Activated CD8-positive, alpha-beta T cell treated with anti-CD3 and anti-CD28 coated beads for 36 hours (primary cell): ENCODE measurements at regions of chr10 and their contacts with region 1.

Region 1: DNA sequence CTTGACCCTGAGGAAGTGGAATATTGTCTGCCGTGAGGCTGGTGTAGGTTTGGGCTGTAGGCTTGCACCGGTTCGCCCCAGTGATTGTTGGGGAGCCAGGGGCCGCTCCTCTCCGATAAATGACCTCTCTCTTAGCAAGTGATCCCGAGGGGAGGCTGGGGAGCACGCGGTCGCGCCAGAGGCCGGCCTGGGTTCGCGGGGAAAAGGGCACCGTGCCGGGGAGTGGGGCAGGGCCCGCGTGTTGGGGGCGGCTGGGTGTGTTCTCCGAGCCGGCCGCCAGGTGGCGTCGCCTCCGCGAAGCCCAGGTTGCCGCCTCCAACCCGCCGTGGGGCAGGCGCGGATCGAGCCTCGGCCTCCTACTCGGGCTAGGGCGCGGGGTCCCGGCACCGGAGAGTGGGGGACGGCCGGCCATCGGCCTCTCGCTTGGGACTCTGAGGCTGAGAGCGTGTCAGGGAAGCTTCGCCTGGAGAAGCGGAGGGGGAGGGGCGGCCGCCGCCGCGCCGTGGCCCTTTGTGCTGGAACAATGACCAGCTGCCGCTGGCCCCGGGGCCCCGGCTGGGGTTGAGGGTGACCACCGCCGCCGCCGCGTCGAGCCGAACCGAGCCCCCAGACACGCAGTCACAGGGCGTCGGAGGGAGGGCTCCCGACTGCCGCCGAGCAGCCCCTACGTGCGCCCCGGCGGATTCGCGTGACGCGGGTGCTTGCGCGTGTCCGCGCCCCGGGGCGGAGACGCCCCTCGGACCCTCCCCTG is 442 bp upstream of the LZTS2 start:
- DNase-seq: peak; percentile 78
- ATAC-seq: peak; percentile 64
- H3K4me3 Mint-ChIP-seq: peak overlapping the region; percentile 78
- H3K27ac Mint-ChIP-seq: peak overlapping the region; percentile 88
- H3K4me1 Mint-ChIP-seq: peaks cover 20% of the 10 kb centered on the region
- H3K27me3 Mint-ChIP-seq: no peaks in the 10 kb centered on the region
- CTCF ChIP-seq: peak; percentile 99

Region 2: GRCh38 chr10:100912605-100913469 is 86.3 kb before region 1 on chr10 and contains the start of gene SLF2:
- CTCF ChIA-PET with region 1: interaction called, 20 read pairs
- POLR2A ChIA-PET with region 1: interaction called, 4 read pairs
- intact Hi-C with region 1: no loop called
- DNase-seq: peak; percentile 97
- ATAC-seq: peak; percentile 97
- H3K4me3 Mint-ChIP-seq: peak within 1 kb of the TSS; percentile 99
- H3K27ac Mint-ChIP-seq: peak within 1 kb of the TSS; percentile 99
- H3K4me1 Mint-ChIP-seq: peaks cover 35% of the 10 kb centered on the region
- H3K27me3 Mint-ChIP-seq: no peaks in the 10 kb centered on the region
- CTCF ChIP-seq: no peak
- total RNA-seq, gene SLF2: 29.0 to 31.9 TPM

Region 3: DNA sequence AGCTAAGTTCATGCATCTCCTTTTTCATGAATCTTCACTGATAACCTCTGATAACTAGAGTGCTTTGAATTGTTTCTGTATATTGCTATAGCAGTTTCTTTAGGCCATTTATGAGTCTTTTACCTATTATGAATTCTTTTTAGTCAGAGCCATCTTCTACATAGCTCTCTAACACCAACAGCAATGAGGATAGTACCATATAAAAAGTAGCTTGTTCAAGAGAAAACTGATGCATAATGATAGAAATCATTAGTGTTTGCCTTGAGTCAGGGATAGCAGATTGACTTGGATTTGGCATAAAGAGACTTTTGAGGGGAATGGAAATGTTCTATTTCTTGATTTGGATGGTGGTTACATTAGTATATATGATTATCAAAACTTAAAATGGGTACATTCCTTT is 55.7 kb before region 1 on chr10:
- CTCF ChIA-PET with region 1: interaction called, 12 read pairs
- POLR2A ChIA-PET with region 1: no interaction called
- intact Hi-C with region 1: no loop called
- DNase-seq: no peak
- ATAC-seq: peak; percentile 27
- H3K4me3 Mint-ChIP-seq: peak overlapping the region; percentile 38
- H3K27ac Mint-ChIP-seq: peak overlapping the region; percentile 68
- H3K4me1 Mint-ChIP-seq: peaks cover 17% of the 10 kb centered on the region
- H3K27me3 Mint-ChIP-seq: no peaks in the 10 kb centered on the region
- CTCF ChIP-seq: no peak

Region 4: GRCh38 chr10:100986952-100987750 is 12.0 kb before region 1 on chr10 and contains the starts of genes MRPL43 and TWNK:
- CTCF ChIA-PET with region 1: interaction called, 50 read pairs
- POLR2A ChIA-PET with region 1: interaction called, 25 read pairs
- intact Hi-C with region 1: no loop called
- DNase-seq: peak; percentile 92
- ATAC-seq: peak; percentile 97
- H3K4me3 Mint-ChIP-seq: peak within 1 kb of the TSS; percentile 96
- H3K27ac Mint-ChIP-seq: peak within 1 kb of the TSS; percentile 89
- H3K4me1 Mint-ChIP-seq: peaks cover 40% of the 10 kb centered on the region
- H3K27me3 Mint-ChIP-seq: no peaks in the 10 kb centered on the region
- CTCF ChIP-seq: no peak
- total RNA-seq, gene MRPL43: 46.0 to 50.9 TPM
- total RNA-seq, gene TWNK: 18.0 to 19.0 TPM

Region 5: DNA sequence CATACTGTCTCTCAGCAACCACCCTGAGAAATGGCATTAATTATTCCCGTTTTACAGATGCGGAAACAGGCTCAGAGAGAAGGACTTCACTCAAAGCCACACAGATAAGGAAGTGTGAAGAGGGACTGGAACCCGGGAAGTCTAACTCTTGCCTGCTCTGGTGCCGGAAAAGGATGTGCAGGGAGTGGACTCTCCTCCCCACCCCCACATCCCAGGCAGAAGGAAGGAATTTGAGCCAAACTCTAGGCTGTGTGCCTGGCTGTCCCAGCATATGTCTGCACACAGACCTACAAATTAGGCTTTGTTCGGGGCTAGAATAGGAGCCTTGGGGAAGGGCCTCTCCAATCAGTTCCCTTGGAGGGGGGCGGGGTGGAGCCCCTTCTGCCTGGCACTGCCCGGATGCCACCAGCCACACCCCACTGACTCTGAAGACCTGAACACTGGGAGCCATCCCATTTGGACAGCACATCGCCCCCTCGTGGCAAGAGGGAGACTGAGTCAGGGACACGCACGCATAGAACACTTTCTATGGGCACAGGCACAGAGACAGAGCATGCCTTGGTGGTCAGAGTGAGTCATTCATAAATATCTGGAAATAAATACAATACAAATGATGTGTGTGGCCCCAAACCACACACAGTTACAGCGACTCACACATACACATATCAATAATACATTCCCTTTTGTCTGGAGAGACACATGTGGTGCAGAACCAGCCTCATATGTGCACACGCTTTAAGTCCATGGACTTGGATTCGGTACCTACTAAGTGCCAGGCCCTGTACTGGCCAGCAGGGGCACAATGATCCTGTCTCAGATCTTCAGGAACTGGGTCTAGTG is 13.6 kb after region 1 on chr10:
- CTCF ChIA-PET with region 1: interaction called, 178 read pairs
- POLR2A ChIA-PET with region 1: interaction called, 4 read pairs
- intact Hi-C with region 1: no loop called
- DNase-seq: peak; percentile 92
- ATAC-seq: peak; percentile 90
- H3K4me3 Mint-ChIP-seq: no peak overlapping the region
- H3K27ac Mint-ChIP-seq: no peak overlapping the region
- H3K4me1 Mint-ChIP-seq: peaks cover 24% of the 10 kb centered on the region
- H3K27me3 Mint-ChIP-seq: peaks cover 19% of the 10 kb centered on the region
- CTCF ChIP-seq: peak; percentile 97

Region 6: GRCh38 chr10:101031128-101031795 is 32.1 kb after region 1 on chr10 and contains the starts of genes PDZD7 and SFXN3:
- CTCF ChIA-PET with region 1: interaction called, 23 read pairs
- POLR2A ChIA-PET with region 1: interaction called, 8 read pairs
- intact Hi-C with region 1: no loop called
- DNase-seq: peak; percentile 98
- ATAC-seq: peak; percentile 79
- H3K4me3 Mint-ChIP-seq: peak within 1 kb of the TSS; percentile 78
- H3K27ac Mint-ChIP-seq: peak within 1 kb of the TSS; percentile 90
- H3K4me1 Mint-ChIP-seq: peaks cover 10% of the 10 kb centered on the region
- H3K27me3 Mint-ChIP-seq: peaks cover 6% of the 10 kb centered on the region
- CTCF ChIP-seq: no peak
- total RNA-seq, gene PDZD7: 0.25 to 0.65 TPM
- total RNA-seq, gene SFXN3: 28.8 to 29.6 TPM

Region 7: DNA sequence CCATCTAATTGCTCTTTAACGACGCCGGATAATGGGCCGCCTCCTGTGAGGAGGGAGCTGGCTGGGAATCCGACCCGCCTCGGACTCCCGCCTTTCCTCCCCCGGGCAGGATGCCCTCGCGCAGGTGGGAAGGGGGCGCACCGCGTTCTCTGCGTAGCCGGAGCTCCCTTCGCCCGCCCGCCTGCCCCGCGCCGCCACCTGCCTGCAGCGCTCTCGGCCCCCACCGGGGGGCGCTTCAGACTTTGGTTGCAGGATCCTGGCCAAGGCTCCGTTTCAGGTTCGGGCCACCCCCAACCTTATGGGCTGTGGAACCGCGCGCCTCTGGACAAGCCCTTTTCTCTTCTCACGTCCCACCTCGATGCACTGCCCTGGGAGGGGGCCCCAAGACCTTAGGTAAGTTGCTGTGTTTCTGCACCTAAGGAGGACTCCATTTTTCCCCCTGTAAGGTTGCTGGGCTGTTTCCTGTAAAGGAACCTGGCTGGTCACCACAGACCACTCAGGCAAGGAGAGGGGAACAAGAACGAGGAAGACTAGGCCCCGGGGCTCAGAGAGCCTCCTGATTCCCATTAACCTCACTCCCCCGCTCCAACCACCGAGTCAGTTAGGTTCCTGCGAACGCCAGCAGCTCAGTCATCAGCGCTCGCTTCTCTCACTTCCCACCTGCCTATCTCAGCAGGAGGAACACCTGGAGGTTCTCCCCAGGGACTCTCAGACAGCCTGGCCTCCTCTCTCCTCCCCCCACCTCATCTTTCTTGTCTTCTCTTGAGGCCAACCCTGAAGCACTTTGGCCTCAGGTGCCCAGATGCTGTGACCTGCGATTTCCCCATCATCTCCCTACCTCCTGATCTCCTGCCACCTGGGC is 51.3 kb after region 1 on chr10:
- CTCF ChIA-PET with region 1: interaction called, 11 read pairs
- POLR2A ChIA-PET with region 1: no interaction called
- intact Hi-C with region 1: no loop called
- DNase-seq: peak; percentile 83
- ATAC-seq: peak; percentile 97
- H3K4me3 Mint-ChIP-seq: no peak overlapping the region
- H3K27ac Mint-ChIP-seq: no peak overlapping the region
- H3K4me1 Mint-ChIP-seq: peaks cover 9% of the 10 kb centered on the region
- H3K27me3 Mint-ChIP-seq: peaks cover 48% of the 10 kb centered on the region
- CTCF ChIP-seq: peak; percentile 88